ENCODE measurements at regions of chr14 and their contacts with region 1.

Region 1: GRCh38 chr14:49867831-49868723 is 15.5 kb upstream of the NEMF start:
- DNase-seq: peak; percentile 95
- H3K4me3 Mint-ChIP-seq: peak overlapping the region; percentile 96
- H3K27ac Mint-ChIP-seq: peak overlapping the region; percentile 99
- H3K4me1 Mint-ChIP-seq: peaks cover 11% of the 10 kb centered on the region
- H3K27me3 Mint-ChIP-seq: no peaks in the 10 kb centered on the region
- CTCF ChIP-seq: no peak

Region 2: GRCh38 chr14:49892636-49893308 is 24.7 kb after region 1 on chr14 and contains the start of gene ARF6:
- CTCF ChIA-PET with region 1: interaction called, 19 read pairs
- POLR2A ChIA-PET with region 1: interaction called, 70 read pairs
- intact Hi-C with region 1: loop called (anchors 2 kb)
- DNase-seq: peak; percentile 97
- H3K4me3 Mint-ChIP-seq: peak within 1 kb of the TSS; percentile 92
- H3K27ac Mint-ChIP-seq: peak within 1 kb of the TSS; percentile 99
- H3K4me1 Mint-ChIP-seq: peaks cover 28% of the 10 kb centered on the region
- H3K27me3 Mint-ChIP-seq: no peaks in the 10 kb centered on the region
- CTCF ChIP-seq: no peak
- total RNA-seq, gene ARF6: 111 and 112 TPM in 2 replicates

Region 3: DNA sequence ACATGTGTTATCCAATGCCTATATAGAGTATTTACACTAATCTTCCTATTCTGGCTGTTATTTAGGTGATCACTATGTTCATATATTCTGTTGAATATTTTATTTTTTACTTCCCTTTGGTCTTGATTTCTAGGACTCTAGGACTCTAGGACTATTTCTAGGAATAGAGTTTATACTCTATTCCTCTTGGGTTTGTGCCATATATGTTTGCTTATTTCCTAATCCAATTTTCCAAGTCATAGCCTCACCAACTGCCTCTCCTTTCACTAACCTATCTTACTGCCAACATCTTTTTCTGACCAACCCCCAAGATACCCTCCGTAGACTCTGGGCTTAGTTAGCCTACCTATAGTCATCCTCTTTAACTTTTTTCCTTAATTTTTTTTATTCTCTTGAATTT is 53.3 kb after region 1 on chr14:
- CTCF ChIA-PET with region 1: no interaction called
- POLR2A ChIA-PET with region 1: no interaction called
- intact Hi-C with region 1: no loop called
- DNase-seq: no peak
- H3K4me3 Mint-ChIP-seq: no peak overlapping the region
- H3K27ac Mint-ChIP-seq: no peak overlapping the region
- H3K4me1 Mint-ChIP-seq: peaks cover 20% of the 10 kb centered on the region
- H3K27me3 Mint-ChIP-seq: no peaks in the 10 kb centered on the region
- CTCF ChIP-seq: no peak

Region 4: GRCh38 chr14:49971156-49972130 is 103.4 kb after region 1 on chr14:
- CTCF ChIA-PET with region 1: interaction called, 11 read pairs
- POLR2A ChIA-PET with region 1: interaction called, 28 read pairs
- intact Hi-C with region 1: no loop called
- DNase-seq: peak; percentile 80
- H3K4me3 Mint-ChIP-seq: peak overlapping the region; percentile 58
- H3K27ac Mint-ChIP-seq: peak overlapping the region; percentile 89
- H3K4me1 Mint-ChIP-seq: peaks cover 48% of the 10 kb centered on the region
- H3K27me3 Mint-ChIP-seq: no peaks in the 10 kb centered on the region
- CTCF ChIP-seq: no peak

Region 5: GRCh38 chr14:50038398-50039119 is 170.5 kb after region 1 on chr14:
- CTCF ChIA-PET with region 1: interaction called, 18 read pairs
- POLR2A ChIA-PET with region 1: interaction called, 33 read pairs
- intact Hi-C with region 1: no loop called
- DNase-seq: peak; percentile 94
- H3K4me3 Mint-ChIP-seq: peak overlapping the region; percentile 40
- H3K27ac Mint-ChIP-seq: peak overlapping the region; percentile 89
- H3K4me1 Mint-ChIP-seq: peaks cover 43% of the 10 kb centered on the region
- H3K27me3 Mint-ChIP-seq: no peaks in the 10 kb centered on the region
- CTCF ChIP-seq: peak; percentile 16

Region 6: GRCh38 chr14:50109342-50109741 is 241.3 kb after region 1 on chr14:
- CTCF ChIA-PET with region 1: interaction called, 178 read pairs
- POLR2A ChIA-PET with region 1: interaction called, 47 read pairs
- intact Hi-C with region 1: loop called (anchors 1 kb)
- DNase-seq: no peak
- H3K4me3 Mint-ChIP-seq: no peak overlapping the region
- H3K27ac Mint-ChIP-seq: no peak overlapping the region
- H3K4me1 Mint-ChIP-seq: no peaks in the 10 kb centered on the region
- H3K27me3 Mint-ChIP-seq: no peaks in the 10 kb centered on the region
- CTCF ChIP-seq: peak; percentile 14